ENCODE measurements at regions of chr12 and their contacts with region 1.

Region 1: DNA sequence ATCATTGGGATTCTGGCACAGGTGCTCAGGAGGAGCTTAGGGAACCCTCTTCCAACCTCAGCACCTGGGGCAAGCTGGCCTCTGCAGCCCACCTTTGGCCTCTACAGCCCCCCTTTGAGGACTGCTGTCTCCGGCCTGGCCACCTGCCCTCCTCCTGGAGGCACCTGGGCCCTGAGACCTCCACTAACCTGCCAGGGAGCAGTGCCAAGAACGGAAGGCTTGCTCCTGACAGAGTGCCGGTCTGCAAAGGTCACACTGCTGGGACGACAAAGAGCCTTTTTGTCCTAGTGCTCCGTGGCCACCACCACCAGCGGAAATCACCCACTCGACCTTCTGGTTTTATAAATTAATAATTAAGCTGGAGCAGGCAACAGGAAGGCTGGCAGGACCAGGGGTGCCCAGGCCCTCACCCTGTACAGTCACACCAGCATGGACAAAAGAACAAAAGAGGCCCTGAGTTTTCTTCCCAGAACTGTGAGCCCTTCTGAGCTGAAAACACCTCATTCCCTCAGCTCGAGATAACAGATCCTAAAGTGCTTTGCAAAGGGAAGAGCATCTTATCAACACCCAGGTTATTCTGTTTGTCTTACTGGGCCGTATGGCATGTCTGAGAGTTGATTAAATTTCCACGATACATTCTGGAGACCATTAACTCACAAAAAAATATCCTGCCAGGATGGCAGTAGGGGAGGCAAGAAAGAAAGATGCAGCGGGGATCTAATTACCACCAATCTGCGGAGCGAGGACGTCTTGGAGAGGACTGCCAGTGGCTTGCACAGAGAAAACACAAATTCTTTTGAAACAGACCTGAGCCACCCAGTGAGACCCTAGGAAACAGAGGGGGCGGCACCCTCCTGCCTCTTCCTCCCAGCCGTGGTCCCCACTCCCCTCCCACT is 8.2 kb downstream of the TESC start:
- DNase-seq: no peak
- H3K4me3 ChIP-seq: no peak overlapping the region
- CTCF ChIP-seq: no peak

Region 2: DNA sequence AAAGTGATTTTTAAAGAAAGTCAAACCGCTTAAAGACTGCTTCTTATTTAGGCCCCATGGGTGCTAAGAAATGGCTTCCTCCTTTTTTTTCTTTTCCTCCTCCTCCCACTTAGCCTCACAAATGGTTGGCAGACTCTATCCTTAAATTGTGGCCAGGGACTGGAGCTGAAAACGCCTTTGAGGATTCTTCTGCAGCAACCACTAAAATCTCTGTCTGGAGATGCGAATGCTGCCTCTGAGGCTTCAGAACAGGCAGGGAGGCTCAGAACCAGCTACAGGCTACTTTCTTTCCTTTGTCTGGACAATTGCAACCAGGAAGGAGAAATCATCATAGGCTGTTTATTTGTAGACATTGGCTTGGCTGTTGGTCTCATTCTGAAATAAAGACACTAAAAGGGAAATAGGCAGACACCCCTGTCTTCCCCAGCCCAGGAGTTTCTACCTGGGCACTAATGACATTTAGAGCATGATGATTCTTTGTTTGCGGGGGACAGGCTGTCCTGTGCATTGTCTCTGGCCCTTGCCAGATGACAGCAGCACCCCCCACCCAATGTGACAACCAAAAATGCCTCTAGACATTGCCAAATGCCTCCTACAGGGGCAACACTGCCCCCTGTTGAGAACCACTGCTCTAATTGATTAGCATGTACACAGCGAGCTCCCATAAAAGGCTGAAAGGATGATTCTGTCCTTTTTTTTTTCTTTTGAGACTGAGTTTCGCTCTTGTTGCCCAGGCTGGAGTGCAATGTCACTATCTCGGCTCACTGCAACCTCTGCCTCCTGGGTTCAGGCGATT is 481.5 kb before region 1 on chr12:
- in situ Hi-C with region 1: no loop called
- DNase-seq: no peak
- H3K4me3 ChIP-seq: no peak overlapping the region
- CTCF ChIP-seq: peak; percentile 22

Region 3: DNA sequence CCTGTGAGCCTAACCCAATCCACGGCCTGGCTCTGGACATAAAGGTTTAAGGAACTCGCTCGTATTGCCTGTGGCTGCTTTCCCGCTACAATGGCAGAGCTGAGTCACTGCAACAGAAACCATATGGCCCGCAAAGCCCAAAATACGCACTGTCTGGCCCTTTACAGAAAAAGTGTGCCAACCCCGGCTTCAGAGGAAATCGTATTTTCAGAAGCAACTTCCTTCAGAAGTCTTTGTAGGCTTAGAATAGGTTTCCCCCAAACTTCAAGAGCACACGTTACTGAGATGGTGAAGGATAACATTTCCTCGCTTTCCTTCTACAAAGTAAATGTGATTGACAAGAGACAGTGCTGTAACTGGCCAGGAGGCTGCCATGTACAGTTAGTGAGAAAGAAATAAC is 43.0 kb after region 1 on chr12:
- in situ Hi-C with region 1: loop called (anchors 5 kb)
- DNase-seq: no peak
- H3K4me3 ChIP-seq: no peak overlapping the region
- CTCF ChIP-seq: no peak

Region 4: GRCh38 chr12:117190210-117190781 is 99.2 kb after region 1 on chr12 and contains the start of gene FBXO21:
- in situ Hi-C with region 1: no loop called
- DNase-seq: peak; percentile 55
- H3K4me3 ChIP-seq: peak within 1 kb of the TSS; percentile 71
- CTCF ChIP-seq: no peak